OCI-LY7 (cell line): ENCODE measurements at regions of chr19 and their contacts with region 1.

Region 1: GRCh38 chr19:44657211-44657921 is 13.7 kb downstream of the PVR start:
- DNase-seq: peak; percentile 68
- H3K4me3 ChIP-seq: no peak overlapping the region
- H3K27ac ChIP-seq: no peak overlapping the region
- H3K4me1 ChIP-seq: peaks cover 6% of the 10 kb centered on the region
- CTCF ChIP-seq: peak; percentile 91

Region 2: DNA sequence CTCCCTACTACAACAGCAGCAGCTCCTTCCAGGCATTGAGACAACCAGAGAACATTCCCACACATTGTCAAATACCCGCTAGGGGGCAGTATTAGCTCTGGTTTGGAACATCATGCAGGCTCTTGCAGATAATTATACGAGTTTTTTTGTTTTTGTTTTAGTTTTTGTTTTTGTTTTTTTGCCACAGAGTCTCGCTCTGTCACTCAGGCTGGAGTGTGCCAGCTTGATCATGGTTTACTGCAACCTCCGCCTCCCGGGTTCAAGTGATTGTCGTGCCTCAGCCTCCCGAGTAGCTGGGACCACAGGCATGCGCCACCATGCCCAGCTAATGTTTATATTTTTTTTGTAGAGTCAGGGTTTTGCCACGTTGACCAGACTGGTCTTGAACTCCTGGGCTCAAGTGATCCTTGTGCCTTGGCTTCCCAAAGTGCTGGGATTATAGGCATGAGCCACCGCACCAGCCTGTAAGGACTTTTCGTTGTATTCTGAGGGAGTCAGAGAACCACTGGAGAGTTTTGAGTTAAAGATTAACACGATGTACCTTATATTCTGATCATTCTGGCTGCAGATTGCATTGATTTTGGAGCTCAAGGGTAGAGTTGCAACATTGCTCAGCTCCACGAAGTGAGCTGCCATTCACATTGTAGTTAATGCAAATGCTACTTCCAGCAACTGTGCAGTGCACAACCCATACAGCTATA is 86.2 kb before region 1 on chr19:
- CTCF ChIA-PET with region 1: no interaction called
- POLR2A ChIA-PET with region 1: no interaction called
- intact Hi-C with region 1: loop called (anchors 1 kb)
- DNase-seq: peak; percentile 72
- H3K4me3 ChIP-seq: no peak overlapping the region
- H3K27ac ChIP-seq: no peak overlapping the region
- H3K4me1 ChIP-seq: no peaks in the 10 kb centered on the region
- CTCF ChIP-seq: peak; percentile 87

Region 3: DNA sequence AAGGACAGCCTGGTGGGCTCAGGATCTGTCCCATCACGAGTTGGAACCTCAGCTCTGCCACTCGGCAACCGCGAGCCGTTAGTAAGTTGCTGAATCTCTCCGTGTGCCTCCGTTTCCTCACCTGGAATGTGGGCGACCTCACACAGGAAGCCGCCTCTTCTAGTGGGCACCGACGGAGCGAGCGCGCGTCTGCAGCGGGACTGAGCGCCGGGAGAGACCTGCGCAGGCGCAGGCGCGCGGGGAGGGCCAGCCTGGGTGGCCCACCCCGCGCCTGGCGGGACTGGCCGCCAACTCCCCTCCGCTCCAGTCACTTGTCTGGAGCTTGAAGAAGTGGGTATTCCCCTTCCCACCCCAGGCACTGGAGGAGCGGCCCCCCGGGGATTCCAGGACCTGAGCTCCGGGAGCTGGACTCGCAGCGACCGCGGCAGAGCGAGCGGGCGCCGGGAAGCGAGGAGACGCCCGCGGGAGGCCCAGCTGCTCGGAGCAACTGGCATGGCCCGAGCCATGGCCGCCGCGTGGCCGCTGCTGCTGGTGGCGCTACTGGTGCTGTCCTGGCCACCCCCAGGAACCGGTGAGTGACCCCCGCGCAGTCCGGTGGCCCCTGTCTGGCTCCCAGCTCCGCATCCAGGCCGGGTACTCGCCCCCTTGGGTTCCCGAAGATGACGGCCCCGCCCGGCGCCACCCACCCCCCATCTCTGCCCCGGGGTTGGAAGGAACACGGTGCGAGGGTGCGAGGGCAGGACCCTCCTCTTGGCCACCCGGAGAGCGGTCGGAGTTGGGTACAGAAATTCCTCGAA is 13.6 kb before region 1 on chr19 and contains the start of gene PVR:
- CTCF ChIA-PET with region 1: no interaction called
- POLR2A ChIA-PET with region 1: no interaction called
- intact Hi-C with region 1: no loop called
- DNase-seq: no peak
- H3K4me3 ChIP-seq: no peak within 1 kb of the TSS
- H3K27ac ChIP-seq: no peak within 1 kb of the TSS
- H3K4me1 ChIP-seq: no peaks in the 10 kb centered on the region
- CTCF ChIP-seq: no peak
- total RNA-seq, gene PVR: not detected in 2 replicates